ENCODE measurements at regions of chr7 and their contacts with region 1.

Region 1: DNA sequence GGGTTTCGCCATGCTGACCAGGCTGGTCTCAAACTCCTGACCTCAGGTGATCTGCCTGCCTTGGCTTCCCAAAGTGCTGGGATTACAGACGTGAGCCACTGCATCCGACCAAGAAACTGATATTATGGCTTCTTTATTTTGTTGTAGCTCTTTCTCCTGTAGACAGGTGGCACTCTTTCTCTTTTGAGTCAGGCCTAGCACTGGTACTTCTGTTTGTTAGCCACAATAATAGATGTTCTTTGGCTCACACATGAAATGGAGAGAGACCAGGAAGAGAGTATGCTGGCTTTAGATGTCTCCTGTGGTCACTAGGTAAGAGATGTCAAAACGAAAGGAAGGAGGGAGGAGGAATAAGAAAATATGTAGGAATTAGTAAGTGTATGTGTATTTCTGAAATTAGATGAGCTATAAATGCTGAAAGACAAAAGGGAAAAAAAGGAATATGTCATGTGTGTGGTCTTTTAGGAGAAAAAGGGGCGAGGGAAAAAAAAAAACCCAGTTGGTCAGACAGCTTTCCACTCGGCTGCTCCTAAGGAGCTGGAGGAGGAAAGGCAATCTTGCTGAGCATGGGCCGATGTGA is 78.7 kb downstream of the CLEC2L start:
- DNase-seq: peak in 1 of 2 experiments; percentile 25
- H3K4me3 ChIP-seq: no peak overlapping the region
- H3K4me3 Mint-ChIP-seq: no peak overlapping the region
- H3K27ac Mint-ChIP-seq: no peak overlapping the region
- H3K4me1 ChIP-seq: no peaks in the 10 kb centered on the region
- H3K4me1 Mint-ChIP-seq: no peaks in the 10 kb centered on the region
- H3K27me3 ChIP-seq: no peaks in the 10 kb centered on the region
- H3K27me3 Mint-ChIP-seq: no peaks in the 10 kb centered on the region
- CTCF ChIP-seq: peak; percentile 44 to 62

Region 2: DNA sequence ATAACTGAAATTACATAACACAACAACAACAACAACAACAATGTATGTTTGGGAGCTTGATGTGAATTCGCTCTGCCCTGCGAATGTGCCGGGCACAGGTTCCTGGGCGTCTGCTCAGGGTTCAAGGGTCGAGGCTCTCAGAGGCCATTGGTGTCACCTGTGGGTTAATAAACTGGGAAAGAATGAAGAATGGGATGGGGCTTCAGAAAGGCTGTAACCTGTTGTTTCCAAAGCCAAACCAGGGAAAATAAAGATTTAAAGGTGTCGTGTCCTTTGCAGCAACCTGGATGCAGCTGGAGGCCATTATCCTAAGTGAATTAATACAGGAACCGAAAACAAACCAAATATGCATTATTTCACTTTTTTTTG is 101.5 kb before region 1 on chr7:
- CTCF ChIA-PET with region 1: interaction called, 19 read pairs
- POLR2A ChIA-PET with region 1: no interaction called
- intact Hi-C with region 1: no loop called
- DNase-seq: no peak
- H3K4me3 ChIP-seq: no peak overlapping the region
- H3K4me3 Mint-ChIP-seq: peak overlapping the region; percentile 72
- H3K27ac Mint-ChIP-seq: no peak overlapping the region
- H3K4me1 ChIP-seq: no peaks in the 10 kb centered on the region; the same call in 1 of the 2 replicates
- H3K4me1 Mint-ChIP-seq: peaks cover 7% of the 10 kb centered on the region
- H3K27me3 ChIP-seq: no peaks in the 10 kb centered on the region
- H3K27me3 Mint-ChIP-seq: no peaks in the 10 kb centered on the region
- CTCF ChIP-seq: no peak